H1 (cell line): ENCODE measurements at regions of chr5 and their contacts with region 1.

Region 1: GRCh38 chr5:152142840-152143469 is 218.3 kb upstream of the GLRA1 start:
- DNase-seq: peak; percentile 61 to 86
- H3K4me3 ChIP-seq: no peak overlapping the region
- H3K27ac ChIP-seq: no peak overlapping the region
- H3K4me1 ChIP-seq: no peaks in the 10 kb centered on the region; a peak in 1 of 7 replicates
- H3K27me3 ChIP-seq: no peaks in the 10 kb centered on the region
- CTCF ChIP-seq: peak; percentile 89 to 93 (median 90)
- EP300 ChIP-seq: no peak
- POLR2A ChIP-seq: no peak
- RAD21 ChIP-seq: peak; percentile 97 to 98

Region 2: GRCh38 chr5:151864061-151864748 is 278.8 kb before region 1 on chr5:
- CTCF ChIA-PET with region 1: interaction called, 15 read pairs
- POLR2A ChIA-PET with region 1: no interaction called
- DNase-seq: no peak
- H3K4me3 ChIP-seq: no peak overlapping the region
- H3K27ac ChIP-seq: no peak overlapping the region
- H3K4me1 ChIP-seq: no peaks in the 10 kb centered on the region
- H3K27me3 ChIP-seq: no peaks in the 10 kb centered on the region
- CTCF ChIP-seq: no peak
- EP300 ChIP-seq: no peak
- POLR2A ChIP-seq: no peak
- RAD21 ChIP-seq: no peak

Region 3: GRCh38 chr5:151924564-151925301 is 218.2 kb before region 1 on chr5 and contains the start of gene GLRA1:
- CTCF ChIA-PET with region 1: interaction called, 21 read pairs
- POLR2A ChIA-PET with region 1: no interaction called
- DNase-seq: peak; percentile 41 to 92
- H3K4me3 ChIP-seq: peak within 1 kb of the TSS in 1 of 4 experiments; percentile 46; a peak in 4 of 8 replicates
- H3K27ac ChIP-seq: no peak within 1 kb of the TSS
- H3K4me1 ChIP-seq: peaks cover 0 to 2% (median 0%) of the 10 kb centered on the region in 4 experiments; a peak in 2 of 7 replicates
- H3K27me3 ChIP-seq: peaks cover 4 to 26% (median 11%) of the 10 kb centered on the region in 4 experiments
- CTCF ChIP-seq: no peak
- EP300 ChIP-seq: no peak
- POLR2A ChIP-seq: no peak
- RAD21 ChIP-seq: peak; percentile 11 to 18; a peak in 3 of 4 replicates
- total RNA-seq, gene GLRA1: not detected in 2 replicates

Region 4: GRCh38 chr5:152119073-152119470 is 23.9 kb before region 1 on chr5:
- CTCF ChIA-PET with region 1: interaction called, 13 read pairs
- POLR2A ChIA-PET with region 1: no interaction called
- DNase-seq: no peak
- H3K4me3 ChIP-seq: no peak overlapping the region
- H3K27ac ChIP-seq: no peak overlapping the region
- H3K4me1 ChIP-seq: peaks cover 0 to 11% (median under 1%) of the 10 kb centered on the region in 4 experiments; a peak in 2 of 7 replicates
- H3K27me3 ChIP-seq: no peaks in the 10 kb centered on the region
- CTCF ChIP-seq: no peak
- EP300 ChIP-seq: no peak
- POLR2A ChIP-seq: no peak
- RAD21 ChIP-seq: no peak

Region 5: GRCh38 chr5:152271420-152271819 is 128.5 kb after region 1 on chr5:
- CTCF ChIA-PET with region 1: interaction called, 26 read pairs
- POLR2A ChIA-PET with region 1: no interaction called
- DNase-seq: no peak
- H3K4me3 ChIP-seq: no peak overlapping the region
- H3K27ac ChIP-seq: no peak overlapping the region
- H3K4me1 ChIP-seq: no peaks in the 10 kb centered on the region
- H3K27me3 ChIP-seq: no peaks in the 10 kb centered on the region
- CTCF ChIP-seq: peak; percentile 18 to 77 (median 67)
- EP300 ChIP-seq: no peak
- POLR2A ChIP-seq: no peak
- RAD21 ChIP-seq: peak; percentile 89 to 92